Activated naive CD8-positive, alpha-beta T cell treated with anti-CD3 and anti-CD28 coated beads, Interleukin-2, amount 10 ng/mL, durations not matched to agents 7 days and 5 days (primary cell): ENCODE measurements at regions of chr16 and their contacts with region 1.

Region 1: GRCh38 chr16:29848420-29849297 is 14.4 kb downstream of the CDIPT start:
- DNase-seq: peak; percentile 89
- ATAC-seq: peak; percentile 92
- H3K4me3 Mint-ChIP-seq: no peak overlapping the region
- H3K27ac Mint-ChIP-seq: no peak overlapping the region
- H3K4me1 Mint-ChIP-seq: peaks cover 4% of the 10 kb centered on the region
- H3K27me3 Mint-ChIP-seq: no peaks in the 10 kb centered on the region

Region 2: DNA sequence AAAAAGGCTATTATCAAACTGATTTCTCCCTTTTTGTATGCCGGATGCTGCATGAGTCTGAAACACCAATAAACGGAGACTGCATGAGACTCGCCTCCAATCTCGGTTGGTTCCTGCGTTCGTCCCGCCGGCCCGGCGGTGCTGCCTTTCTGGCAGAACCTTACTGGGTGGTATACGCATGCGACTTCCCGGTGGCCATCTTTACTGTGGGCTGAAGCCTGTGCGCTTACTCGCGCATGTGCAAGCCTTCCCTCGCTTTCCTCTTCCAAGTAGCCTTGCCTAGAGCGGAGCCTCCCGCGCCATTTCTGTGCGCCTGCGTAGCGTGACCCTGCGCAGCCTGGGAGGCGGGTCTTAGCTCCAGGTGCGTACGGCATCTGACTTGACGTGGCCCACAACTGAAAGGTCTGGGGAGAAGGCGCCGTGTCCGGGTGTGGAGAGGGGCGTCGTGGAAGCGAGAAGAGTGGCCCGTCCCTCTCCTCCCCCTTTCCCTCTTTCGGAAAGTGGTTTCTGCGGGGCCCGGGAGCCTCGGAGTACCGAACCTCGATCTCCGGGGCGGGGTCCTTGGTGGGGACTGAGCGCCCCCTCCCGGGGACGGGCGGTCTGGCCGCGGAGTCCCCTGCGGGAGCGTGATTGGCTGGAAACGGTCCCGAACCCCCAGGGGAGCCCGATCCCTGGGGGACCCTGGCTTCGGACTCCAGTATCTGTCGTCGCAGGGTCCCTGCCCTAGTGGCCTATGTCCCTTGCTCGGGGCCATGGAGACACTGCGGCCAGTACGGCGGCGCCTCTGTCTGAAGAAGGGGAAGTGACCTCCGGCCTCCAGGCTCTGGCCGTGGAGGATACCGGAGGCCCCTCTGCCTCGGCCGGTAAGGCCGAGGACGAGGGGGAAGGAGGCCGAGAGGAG is 32.6 kb before region 1 on chr16 and contains the start of gene PAGR1:
- POLR2A ChIA-PET with region 1: interaction called, 18 read pairs
- DNase-seq: peak; percentile 96
- ATAC-seq: peak; percentile 78
- H3K4me3 Mint-ChIP-seq: peak within 1 kb of the TSS; percentile 93
- H3K27ac Mint-ChIP-seq: peak within 1 kb of the TSS; percentile 96
- H3K4me1 Mint-ChIP-seq: peaks cover 39% of the 10 kb centered on the region
- H3K27me3 Mint-ChIP-seq: peaks cover 12% of the 10 kb centered on the region
- total RNA-seq, gene PAGR1: 29.8 to 34.3 TPM